MCF 10A (cell line): ENCODE measurements at regions of chr6 and their contacts with region 1.

Region 1: DNA sequence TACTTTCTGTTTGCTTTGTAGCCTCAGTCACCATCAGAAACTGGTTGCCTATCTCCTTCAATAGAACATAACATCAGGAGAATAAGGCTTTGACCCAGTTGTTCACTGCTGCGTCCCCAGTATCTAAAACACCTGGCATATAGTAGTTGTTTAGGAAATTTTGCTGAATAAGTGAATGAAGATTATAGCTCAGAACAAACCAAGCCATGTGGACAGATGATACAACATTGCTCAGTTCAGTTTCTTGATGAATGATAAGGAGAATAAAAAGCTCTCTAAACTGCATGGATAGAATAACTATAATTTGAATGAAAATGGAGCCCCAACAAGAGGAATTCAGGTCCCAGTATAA is 5.2 kb upstream of the SERPINB1 start:
- DNase-seq: no peak
- H3K4me3 Mint-ChIP-seq: peak overlapping the region; percentile 54
- H3K27ac Mint-ChIP-seq: peak overlapping the region; percentile 71
- H3K4me1 Mint-ChIP-seq: peaks cover 19% of the 10 kb centered on the region
- H3K27me3 Mint-ChIP-seq: no peaks in the 10 kb centered on the region
- CTCF ChIP-seq: no peak

Region 2: GRCh38 chr6:2307799-2308198 is 539.0 kb before region 1 on chr6:
- CTCF ChIA-PET with region 1: no interaction called
- POLR2A ChIA-PET with region 1: no interaction called
- intact Hi-C with region 1: no loop called
- DNase-seq: no peak
- H3K4me3 Mint-ChIP-seq: no peak overlapping the region
- H3K27ac Mint-ChIP-seq: no peak overlapping the region
- H3K4me1 Mint-ChIP-seq: no peaks in the 10 kb centered on the region
- H3K27me3 Mint-ChIP-seq: no peaks in the 10 kb centered on the region
- CTCF ChIP-seq: no peak

Region 3: GRCh38 chr6:2911171-2911570 is 64.3 kb after region 1 on chr6:
- CTCF ChIA-PET with region 1: interaction called, 9 read pairs
- POLR2A ChIA-PET with region 1: interaction called, 3 read pairs
- intact Hi-C with region 1: loop called (anchors 1 kb)
- DNase-seq: peak; percentile 41
- H3K4me3 Mint-ChIP-seq: no peak overlapping the region
- H3K27ac Mint-ChIP-seq: no peak overlapping the region
- H3K4me1 Mint-ChIP-seq: no peaks in the 10 kb centered on the region
- H3K27me3 Mint-ChIP-seq: no peaks in the 10 kb centered on the region
- CTCF ChIP-seq: no peak